HEK293 (cell line): ENCODE measurements at regions of chr7 and their contacts with region 1.

Region 1: GRCh38 chr7:21261627-21262594 is 166.0 kb upstream of the SP4 start:
- H3K4me3 ChIP-seq: no peak overlapping the region
- H3K27ac ChIP-seq: no peak overlapping the region
- H3K4me1 ChIP-seq: 0 out of 2 replicates have a peak, but pooled peaks cover 3% of the 10 kb centered on the region
- CTCF ChIP-seq: peak; percentile 45; the same call in 1 of the 2 replicates

Region 2: GRCh38 chr7:21317966-21318915 is 56.3 kb after region 1 on chr7:
- CTCF ChIA-PET with region 1: no interaction called
- POLR2A ChIA-PET with region 1: no interaction called
- H3K4me3 ChIP-seq: no peak overlapping the region
- H3K27ac ChIP-seq: no peak overlapping the region
- H3K4me1 ChIP-seq: no peaks in the 10 kb centered on the region
- CTCF ChIP-seq: no peak

Region 3: DNA sequence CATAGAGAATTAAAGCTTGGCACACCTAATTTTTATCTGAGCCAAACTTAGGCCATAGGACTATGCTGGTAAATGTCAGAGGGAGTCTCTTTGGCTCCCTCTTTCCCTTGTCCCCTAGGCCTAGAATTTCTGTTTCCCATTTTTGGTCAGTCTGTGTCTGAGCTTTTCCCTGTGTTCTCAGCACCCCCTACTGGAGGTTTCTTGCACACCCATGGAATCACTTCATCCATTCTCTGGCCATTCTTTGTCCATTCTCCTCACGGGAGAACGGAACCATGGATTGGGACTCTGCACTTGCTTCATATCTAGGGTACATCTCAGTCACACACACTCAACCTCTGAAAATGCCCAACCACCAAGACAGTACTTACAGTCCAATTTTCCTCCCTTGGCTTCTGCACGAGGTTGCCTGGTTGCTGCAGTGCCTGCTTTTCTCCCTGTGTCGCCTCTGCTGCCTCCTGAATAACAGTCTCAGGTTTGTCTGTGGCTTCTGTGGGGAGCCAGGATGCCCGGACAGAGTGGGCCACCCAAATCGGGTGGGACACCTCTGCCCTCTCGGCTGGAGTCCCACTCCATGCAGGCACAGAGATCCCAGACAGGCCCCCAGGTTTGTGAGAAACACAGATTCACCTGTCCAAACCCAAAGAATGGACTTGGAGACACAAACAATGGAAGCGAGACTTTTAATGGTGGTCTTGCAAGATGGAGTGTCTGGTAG is 245.9 kb after region 1 on chr7:
- CTCF ChIA-PET with region 1: interaction called, 10 read pairs
- POLR2A ChIA-PET with region 1: no interaction called
- H3K4me3 ChIP-seq: no peak overlapping the region
- H3K27ac ChIP-seq: no peak overlapping the region
- H3K4me1 ChIP-seq: no peaks in the 10 kb centered on the region
- CTCF ChIP-seq: no peak

Region 4: DNA sequence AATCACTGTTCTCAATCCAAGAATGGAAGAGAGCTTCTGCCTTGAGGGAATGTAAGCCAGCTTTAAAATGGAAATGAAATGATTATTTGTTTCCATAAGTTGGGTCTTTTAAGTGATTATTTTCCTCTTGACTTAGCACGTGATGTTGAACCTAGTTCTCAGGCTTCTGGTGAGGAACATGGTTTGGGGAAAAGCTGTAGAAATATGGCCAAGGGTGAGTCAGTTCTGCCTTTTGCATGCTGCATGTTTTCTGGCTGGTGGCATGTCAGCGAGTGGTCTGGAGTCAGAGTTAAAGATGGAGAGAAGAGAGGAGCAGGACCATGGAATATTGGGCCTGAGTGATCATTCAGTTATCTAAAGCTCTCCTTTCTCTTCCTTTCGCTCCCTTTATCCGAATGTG is 334.9 kb after region 1 on chr7:
- CTCF ChIA-PET with region 1: no interaction called
- POLR2A ChIA-PET with region 1: no interaction called
- H3K4me3 ChIP-seq: no peak overlapping the region
- H3K27ac ChIP-seq: no peak overlapping the region
- H3K4me1 ChIP-seq: no peaks in the 10 kb centered on the region
- CTCF ChIP-seq: no peak